ENCODE measurements at regions of chr5 and their contacts with region 1.

Region 1: GRCh38 chr5:108642167-108642906 is 105.4 kb upstream of the FER start:
- DNase-seq: peak; percentile 83
- H3K4me3 Mint-ChIP-seq: peak overlapping the region; percentile 5
- H3K27ac Mint-ChIP-seq: no peak overlapping the region
- H3K4me1 Mint-ChIP-seq: peaks cover 6% of the 10 kb centered on the region
- H3K27me3 Mint-ChIP-seq: no peaks in the 10 kb centered on the region
- CTCF ChIP-seq: peak; percentile 77

Region 2: DNA sequence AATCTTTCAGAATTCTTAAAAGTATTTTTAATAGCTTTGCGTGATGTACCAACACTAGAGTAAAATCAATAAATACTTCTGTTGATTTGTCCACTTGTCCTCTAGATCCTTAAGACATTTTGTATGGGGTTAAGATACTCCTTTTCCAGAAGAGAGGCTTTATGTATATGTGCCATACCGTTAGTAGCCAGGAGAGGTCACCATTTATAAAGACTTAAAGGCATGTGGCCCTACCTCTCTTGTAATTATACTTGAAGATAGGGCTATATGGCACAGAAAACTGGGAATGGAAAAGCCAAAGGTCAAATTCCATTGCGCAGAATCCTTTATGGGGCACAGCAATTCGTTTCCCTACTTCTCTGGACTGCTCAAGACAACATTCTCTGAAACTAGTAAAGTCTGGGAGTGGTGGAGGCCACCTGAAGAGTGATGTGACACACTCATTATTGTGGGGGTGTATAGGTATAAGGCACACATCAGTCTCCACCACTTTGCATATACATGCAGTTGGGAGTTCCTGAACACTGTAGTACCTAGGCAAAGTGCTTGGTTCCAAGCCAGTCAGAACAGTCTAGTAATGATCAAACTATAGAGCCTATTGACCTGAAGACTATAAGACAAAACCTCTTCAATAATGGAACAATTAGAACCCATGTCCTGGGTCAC is 120.4 kb before region 1 on chr5:
- CTCF ChIA-PET with region 1: interaction called, 5 read pairs
- POLR2A ChIA-PET with region 1: no interaction called
- intact Hi-C with region 1: loop called (anchors 10 kb)
- DNase-seq: peak; percentile 74
- H3K4me3 Mint-ChIP-seq: no peak overlapping the region
- H3K27ac Mint-ChIP-seq: no peak overlapping the region
- H3K4me1 Mint-ChIP-seq: no peaks in the 10 kb centered on the region
- H3K27me3 Mint-ChIP-seq: peaks cover 34% of the 10 kb centered on the region
- CTCF ChIP-seq: peak; percentile 56

Region 3: DNA sequence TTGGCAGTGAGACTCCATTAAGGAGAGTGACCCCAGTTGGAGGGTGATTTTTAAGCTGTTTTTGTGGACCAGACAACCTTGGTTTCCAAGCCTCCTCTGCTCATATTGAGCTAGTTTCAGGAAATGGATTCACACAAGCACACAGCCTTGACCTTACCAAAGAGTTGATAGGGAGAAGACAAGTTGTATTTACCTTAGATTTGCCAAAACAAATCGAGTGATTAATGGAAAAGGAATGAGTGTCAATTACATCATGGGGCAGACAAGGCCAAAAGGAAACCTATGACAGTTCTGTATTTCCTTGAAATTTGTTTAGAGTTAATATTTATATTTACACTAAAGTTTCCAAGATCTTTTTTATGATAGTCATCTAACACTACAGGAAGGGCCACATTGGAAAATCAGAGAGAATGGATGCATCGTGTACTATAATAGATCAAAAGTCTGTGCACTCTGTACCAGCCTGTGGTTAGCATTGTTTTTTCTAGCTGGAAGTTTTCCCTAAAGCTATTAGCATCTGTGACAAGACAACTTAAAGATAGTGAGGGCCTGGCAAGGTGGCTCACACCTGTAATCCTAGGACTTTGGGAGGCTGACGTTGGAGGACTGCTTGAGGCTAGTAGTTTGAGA is 19.4 kb after region 1 on chr5:
- CTCF ChIA-PET with region 1: interaction called, 16 read pairs
- POLR2A ChIA-PET with region 1: interaction called, 3 read pairs
- intact Hi-C with region 1: no loop called
- DNase-seq: peak; percentile 67
- H3K4me3 Mint-ChIP-seq: no peak overlapping the region
- H3K27ac Mint-ChIP-seq: no peak overlapping the region
- H3K4me1 Mint-ChIP-seq: peaks cover 20% of the 10 kb centered on the region
- H3K27me3 Mint-ChIP-seq: no peaks in the 10 kb centered on the region
- CTCF ChIP-seq: no peak

Region 4: DNA sequence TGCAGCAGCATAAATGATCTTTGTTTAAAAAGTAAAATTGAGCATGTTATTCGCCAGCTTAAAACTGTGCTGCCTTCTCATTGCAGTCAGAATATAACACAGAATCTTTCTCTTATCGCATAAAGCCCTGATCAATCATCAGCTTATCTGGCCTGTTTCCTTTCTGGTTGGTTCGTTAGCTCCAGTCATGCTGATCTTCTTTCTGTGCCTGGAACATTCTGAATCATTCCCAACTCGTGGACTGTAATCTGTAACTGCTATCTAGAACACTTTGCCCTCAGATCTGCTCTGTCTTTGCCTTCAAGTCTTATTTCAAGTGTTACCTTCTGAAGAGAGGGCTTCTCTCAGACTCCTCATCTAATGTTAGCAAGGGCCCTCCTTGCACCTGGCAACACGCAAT is 93.5 kb after region 1 on chr5:
- CTCF ChIA-PET with region 1: no interaction called
- POLR2A ChIA-PET with region 1: no interaction called
- intact Hi-C with region 1: no loop called
- DNase-seq: no peak
- H3K4me3 Mint-ChIP-seq: no peak overlapping the region
- H3K27ac Mint-ChIP-seq: no peak overlapping the region
- H3K4me1 Mint-ChIP-seq: no peaks in the 10 kb centered on the region
- H3K27me3 Mint-ChIP-seq: no peaks in the 10 kb centered on the region
- CTCF ChIP-seq: no peak

Region 5: DNA sequence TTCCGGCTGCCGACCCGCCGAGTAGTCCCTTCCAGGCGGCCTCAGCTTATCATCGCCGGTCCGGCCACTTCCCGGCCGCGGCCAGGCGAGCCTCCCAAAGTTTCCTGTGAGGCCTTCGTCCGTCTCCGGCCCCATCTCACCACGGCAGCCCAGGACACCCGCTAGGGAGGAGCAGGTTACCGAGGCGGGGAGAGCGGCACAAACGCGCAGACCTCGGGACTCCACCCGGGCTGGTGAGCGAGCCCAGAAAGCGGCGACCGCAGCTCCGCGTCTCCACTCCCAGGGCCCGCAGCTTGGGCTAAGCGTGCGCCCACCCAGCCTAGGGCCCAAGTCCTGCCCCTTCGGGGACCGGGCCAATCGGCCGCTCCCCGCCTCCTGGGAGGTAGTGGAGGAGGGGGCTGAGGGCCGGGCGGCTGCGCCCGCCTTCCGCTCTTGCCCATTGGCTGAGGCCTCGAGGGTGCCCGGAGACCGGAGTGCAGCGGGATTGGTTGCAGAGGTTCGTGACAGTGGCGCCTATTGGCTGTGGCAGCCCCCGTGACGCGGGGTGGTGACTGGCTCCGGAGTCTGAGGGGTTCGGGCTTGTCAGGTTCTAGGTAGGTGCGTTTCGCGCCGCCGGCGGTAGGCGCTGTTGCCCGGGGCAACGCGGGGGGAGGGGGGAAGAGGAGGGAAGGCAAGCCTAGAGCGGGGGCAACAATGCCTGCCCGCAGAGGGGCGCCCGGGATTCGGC is 106.2 kb after region 1 on chr5:
- CTCF ChIA-PET with region 1: no interaction called
- POLR2A ChIA-PET with region 1: interaction called, 4 read pairs
- intact Hi-C with region 1: loop called (anchors 1 kb)
- DNase-seq: peak; percentile 98
- H3K4me3 Mint-ChIP-seq: peak overlapping the region; percentile 87
- H3K27ac Mint-ChIP-seq: peak overlapping the region; percentile 99
- H3K4me1 Mint-ChIP-seq: peaks cover 6% of the 10 kb centered on the region
- H3K27me3 Mint-ChIP-seq: no peaks in the 10 kb centered on the region
- CTCF ChIP-seq: no peak

Region 6: DNA sequence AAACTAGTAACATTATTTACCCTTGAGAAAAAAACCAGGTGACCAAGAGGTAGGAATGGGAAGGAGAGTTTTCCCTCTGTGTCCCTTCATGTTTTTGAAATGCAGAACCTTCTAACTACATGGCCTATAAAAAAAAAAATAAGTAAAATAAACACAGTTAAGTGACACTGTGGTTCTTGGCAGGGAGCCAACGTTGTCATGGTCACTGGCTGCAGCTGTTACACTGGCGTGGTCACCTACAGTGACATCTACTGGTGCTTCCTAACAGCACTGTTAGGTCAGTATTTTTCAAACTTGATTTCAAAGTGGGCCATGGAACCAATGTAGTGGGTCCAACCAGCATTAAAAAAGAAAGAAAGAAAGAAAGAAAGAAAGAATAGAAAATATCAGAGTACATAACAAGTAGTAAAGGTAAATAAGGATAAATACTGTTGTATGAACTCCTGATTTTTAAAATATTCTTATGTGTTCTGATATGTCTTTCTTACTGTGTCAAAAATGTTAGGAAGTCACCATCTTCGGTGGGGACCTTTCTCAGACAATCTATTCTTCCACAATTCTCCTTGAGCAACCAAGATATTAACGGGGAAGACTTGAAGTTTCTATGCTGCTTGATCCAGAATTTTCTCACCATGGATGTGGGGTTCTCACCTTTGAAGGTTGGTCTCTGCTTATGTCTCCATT is 826.5 kb after region 1 on chr5:
- CTCF ChIA-PET with region 1: interaction called, 4 read pairs
- POLR2A ChIA-PET with region 1: no interaction called
- intact Hi-C with region 1: loop called (anchors 5 kb)
- DNase-seq: peak; percentile 96
- H3K4me3 Mint-ChIP-seq: no peak overlapping the region
- H3K27ac Mint-ChIP-seq: peak overlapping the region; percentile 24
- H3K4me1 Mint-ChIP-seq: peaks cover 6% of the 10 kb centered on the region
- H3K27me3 Mint-ChIP-seq: no peaks in the 10 kb centered on the region
- CTCF ChIP-seq: peak; percentile 63